Left colon (tissue), 2 donors: ENCODE measurements at regions of chr22 and their contacts with region 1.

Region 1: GRCh38 chr22:49979587-49980264 is 19.2 kb downstream of the PIM3 start:
- DNase-seq: peak in 1 of 2 donors; percentile 57
- ATAC-seq: peak; percentile 70

Region 2: DNA sequence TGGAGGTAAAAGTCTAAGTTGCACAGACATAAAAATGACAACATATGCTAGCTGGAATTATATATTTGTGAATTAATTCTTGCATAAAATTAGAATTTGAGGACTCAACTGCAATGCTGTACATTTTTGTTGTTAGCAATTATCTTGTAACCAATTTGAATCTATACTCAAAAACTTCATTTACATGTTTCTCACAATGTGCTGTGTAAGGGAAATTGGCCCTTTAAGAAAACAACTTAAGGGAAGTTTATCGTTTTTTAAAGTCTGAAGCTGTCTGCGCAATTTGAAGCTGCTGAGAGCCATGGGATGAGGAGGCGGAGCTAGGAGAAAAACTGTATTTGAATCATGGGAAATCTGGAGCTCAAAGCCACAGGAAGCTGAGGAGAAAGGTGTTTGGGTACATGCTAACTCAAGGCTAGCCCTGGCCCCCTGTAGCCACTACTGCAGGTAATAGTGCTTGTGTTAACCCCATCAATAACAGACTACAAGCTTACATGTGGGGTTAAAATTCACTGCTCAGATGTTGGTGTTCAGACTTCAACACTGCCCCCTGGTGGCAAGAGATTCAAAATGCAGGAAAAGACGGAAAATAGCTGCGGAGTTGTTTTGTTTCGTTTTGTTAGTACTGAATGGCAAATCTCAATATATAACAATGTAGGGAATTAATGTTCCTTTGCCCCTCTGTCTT is 278.2 kb before region 1 on chr22:
- intact Hi-C with region 1: no loop called
- DNase-seq: no peak
- ATAC-seq: no peak

Region 3: GRCh38 chr22:49929208-49930136 is 50.3 kb before region 1 on chr22:
- intact Hi-C with region 1: loop called in 1 of 2 experiments (anchors 10 kb)
- DNase-seq: peak; percentile 51 to 78
- ATAC-seq: peak; percentile 65

Region 4: DNA sequence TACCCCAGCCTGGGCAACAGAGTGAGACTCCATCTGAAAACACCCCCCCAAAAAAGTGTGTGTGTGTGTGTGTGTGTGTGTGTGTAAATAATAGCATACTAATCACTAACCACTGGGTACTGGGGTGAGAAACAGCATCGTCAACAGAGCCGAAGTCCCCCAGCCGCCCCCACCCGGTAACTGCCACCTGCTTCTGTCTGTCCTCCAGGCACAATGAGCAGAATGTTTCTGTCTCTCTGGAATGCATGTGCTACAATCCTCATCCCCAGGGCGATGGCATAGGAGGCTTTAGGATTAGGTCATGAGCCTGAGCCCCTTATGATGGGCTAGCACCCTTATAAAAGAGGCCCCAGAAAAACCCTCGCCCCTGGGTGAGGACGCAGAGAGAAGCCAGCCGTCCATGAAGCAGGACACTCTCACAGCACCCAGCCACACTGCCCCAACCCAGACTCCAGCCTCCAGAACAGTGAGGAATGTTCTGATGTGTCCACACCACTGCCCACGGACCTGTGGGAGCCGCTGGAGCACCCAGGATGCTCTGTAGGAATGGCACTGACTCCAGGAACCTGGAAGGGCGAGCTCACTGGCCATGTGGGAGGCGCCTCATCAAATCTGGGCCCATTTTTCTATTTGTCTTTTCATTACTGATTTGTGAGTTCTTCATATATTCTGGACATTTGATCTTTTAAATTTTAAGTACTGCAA is 68.5 kb after region 1 on chr22:
- intact Hi-C with region 1: no loop called
- DNase-seq: no peak
- ATAC-seq: no peak

Region 5: GRCh38 chr22:50525390-50526068 is 545.8 kb after region 1 on chr22 and contains the start of gene SCO2:
- intact Hi-C with region 1: no loop called
- DNase-seq: peak; percentile 96 to 98
- ATAC-seq: peak; percentile 54
- total RNA-seq, gene SCO2: 5.5 to 5.7 TPM